ENCODE measurements at regions of chr20 and their contacts with region 1.

Region 1: GRCh38 chr20:47576516-47577033 is 74.9 kb downstream of the NCOA3 start:
- DNase-seq: peak; percentile 60
- ATAC-seq: peak; percentile 63
- H3K4me3 ChIP-seq: peak overlapping the region in 3 of 5 experiments; percentile 2 to 50 (median 15)
- H3K4me3 Mint-ChIP-seq: peak overlapping the region; percentile 76
- H3K27ac ChIP-seq: peak overlapping the region; percentile 46 to 58
- H3K27ac Mint-ChIP-seq: peak overlapping the region; percentile 68
- H3K4me1 ChIP-seq: peaks cover 77 to 91% of the 10 kb centered on the region in 2 donors
- H3K4me1 Mint-ChIP-seq: peaks cover 88% of the 10 kb centered on the region
- H3K27me3 ChIP-seq: no peaks in the 10 kb centered on the region
- H3K27me3 Mint-ChIP-seq: no peaks in the 10 kb centered on the region
- CTCF ChIP-seq: no peak

Region 2: DNA sequence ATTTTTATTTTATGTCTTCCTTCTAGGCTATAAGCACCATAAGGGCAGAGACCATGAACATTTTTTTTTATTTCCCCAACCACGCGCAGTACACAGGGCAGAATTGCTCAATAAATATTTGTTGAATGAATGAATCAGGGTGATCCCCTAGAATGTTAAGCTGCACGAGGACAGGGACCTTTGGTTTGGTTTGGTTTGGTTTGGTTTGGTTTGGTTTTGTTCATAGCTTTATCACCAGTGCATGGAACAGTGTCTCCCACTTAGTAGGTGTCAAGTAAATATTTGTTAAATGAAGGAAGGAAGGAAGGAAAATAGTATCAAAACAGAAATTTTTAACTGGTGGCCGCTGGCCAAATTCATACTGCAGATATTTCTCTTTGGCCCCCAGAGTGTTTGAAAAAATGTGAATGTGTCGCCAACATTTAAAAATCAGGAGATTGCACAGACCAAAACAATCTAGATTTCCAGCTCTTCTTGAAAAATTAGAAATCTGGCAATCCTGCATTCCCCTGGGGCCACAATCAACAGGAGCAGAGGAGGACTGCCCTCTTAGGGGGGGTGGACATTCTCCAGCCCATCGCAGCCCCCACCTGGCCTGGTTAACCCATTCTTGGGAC is 476.6 kb before region 1 on chr20:
- CTCF ChIA-PET with region 1: no interaction called
- POLR2A ChIA-PET with region 1: no interaction called
- intact Hi-C with region 1: no loop called
- DNase-seq: no peak
- ATAC-seq: no peak
- H3K4me3 ChIP-seq: no peak overlapping the region
- H3K4me3 Mint-ChIP-seq: no peak overlapping the region
- H3K27ac ChIP-seq: no peak overlapping the region
- H3K27ac Mint-ChIP-seq: no peak overlapping the region
- H3K4me1 ChIP-seq: no peaks in the 10 kb centered on the region
- H3K4me1 Mint-ChIP-seq: no peaks in the 10 kb centered on the region
- H3K27me3 ChIP-seq: peaks cover 0 to 15% (median 0%) of the 10 kb centered on the region in 4 experiments
- H3K27me3 Mint-ChIP-seq: peaks cover 29% of the 10 kb centered on the region
- CTCF ChIP-seq: no peak

Region 3: DNA sequence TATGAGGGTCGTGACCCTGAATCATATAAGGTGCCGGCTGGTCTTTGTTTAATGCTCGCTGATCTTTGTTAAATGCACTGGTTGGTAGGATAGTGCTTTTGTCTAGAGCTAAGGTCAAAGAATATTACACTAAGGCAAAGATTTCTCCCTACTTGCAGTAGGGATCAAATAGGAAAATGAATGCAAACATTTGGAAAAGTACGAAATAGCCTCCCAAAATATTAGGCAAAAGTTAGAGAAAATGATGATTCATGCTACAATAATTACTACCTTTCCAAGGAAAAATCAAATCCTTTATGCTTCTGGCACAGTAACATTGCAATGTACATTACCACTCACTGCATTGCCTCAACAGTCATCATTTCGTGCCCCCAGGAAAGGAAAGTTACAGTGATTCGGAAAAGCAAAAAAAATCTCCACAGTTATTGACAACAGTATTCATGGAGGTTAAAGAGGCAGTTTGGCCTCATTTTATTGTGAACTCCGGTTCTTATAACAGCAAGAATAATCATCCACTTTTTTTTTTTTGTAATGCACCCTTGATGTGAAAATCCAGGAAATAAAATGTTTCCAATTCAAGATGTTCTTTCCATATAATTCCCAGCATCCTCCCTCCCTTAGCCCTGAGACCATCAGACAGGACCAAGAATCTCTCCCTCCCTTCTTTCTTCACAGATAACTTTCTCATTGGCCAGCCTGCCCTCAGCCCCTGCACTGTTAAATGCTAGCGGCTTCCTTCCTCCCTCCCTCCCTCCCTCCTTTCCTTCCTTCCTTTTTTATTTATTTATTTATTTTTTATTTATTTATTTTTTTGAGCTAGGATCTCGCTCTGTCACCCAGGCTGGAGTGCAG is 158.3 kb before region 1 on chr20:
- CTCF ChIA-PET with region 1: no interaction called
- POLR2A ChIA-PET with region 1: no interaction called
- intact Hi-C with region 1: loop called (anchors 5 kb)
- DNase-seq: no peak
- ATAC-seq: no peak
- H3K4me3 ChIP-seq: no peak overlapping the region
- H3K4me3 Mint-ChIP-seq: no peak overlapping the region
- H3K27ac ChIP-seq: peak overlapping the region; percentile 97 to 99
- H3K27ac Mint-ChIP-seq: peak overlapping the region; percentile 99
- H3K4me1 ChIP-seq: peaks cover 59 to 73% of the 10 kb centered on the region in 2 donors
- H3K4me1 Mint-ChIP-seq: peaks cover 67% of the 10 kb centered on the region
- H3K27me3 ChIP-seq: no peaks in the 10 kb centered on the region
- H3K27me3 Mint-ChIP-seq: no peaks in the 10 kb centered on the region
- CTCF ChIP-seq: no peak

Region 4: GRCh38 chr20:47529840-47530239 is 46.7 kb before region 1 on chr20:
- CTCF ChIA-PET with region 1: no interaction called
- POLR2A ChIA-PET with region 1: no interaction called
- intact Hi-C with region 1: no loop called
- DNase-seq: no peak
- ATAC-seq: no peak
- H3K4me3 ChIP-seq: no peak overlapping the region
- H3K4me3 Mint-ChIP-seq: no peak overlapping the region
- H3K27ac ChIP-seq: peak overlapping the region in 1 of 2 donors; percentile 42
- H3K27ac Mint-ChIP-seq: peak overlapping the region; percentile 32
- H3K4me1 ChIP-seq: peaks cover 21 to 26% of the 10 kb centered on the region in 2 donors
- H3K4me1 Mint-ChIP-seq: peaks cover 54% of the 10 kb centered on the region
- H3K27me3 ChIP-seq: no peaks in the 10 kb centered on the region
- H3K27me3 Mint-ChIP-seq: no peaks in the 10 kb centered on the region
- CTCF ChIP-seq: no peak

Region 5: GRCh38 chr20:47540443-47541354 is 35.9 kb before region 1 on chr20:
- CTCF ChIA-PET with region 1: no interaction called
- POLR2A ChIA-PET with region 1: no interaction called
- intact Hi-C with region 1: loop called (anchors 5 kb)
- DNase-seq: peak; percentile 30
- ATAC-seq: no peak
- H3K4me3 ChIP-seq: no peak overlapping the region
- H3K4me3 Mint-ChIP-seq: peak overlapping the region; percentile 24
- H3K27ac ChIP-seq: peak overlapping the region in 1 of 2 donors; percentile 73
- H3K27ac Mint-ChIP-seq: peak overlapping the region; percentile 10
- H3K4me1 ChIP-seq: peaks cover 76 to 90% of the 10 kb centered on the region in 2 donors
- H3K4me1 Mint-ChIP-seq: peaks cover 84% of the 10 kb centered on the region
- H3K27me3 ChIP-seq: no peaks in the 10 kb centered on the region
- H3K27me3 Mint-ChIP-seq: no peaks in the 10 kb centered on the region
- CTCF ChIP-seq: no peak

Region 6: GRCh38 chr20:47561180-47561579 is 15.4 kb before region 1 on chr20:
- CTCF ChIA-PET with region 1: interaction called, 4 read pairs
- POLR2A ChIA-PET with region 1: interaction called, 3 read pairs
- intact Hi-C with region 1: loop called (anchors 2 kb)
- DNase-seq: no peak
- ATAC-seq: no peak
- H3K4me3 ChIP-seq: peak overlapping the region in 1 of 5 experiments; percentile 36
- H3K4me3 Mint-ChIP-seq: peak overlapping the region; percentile 50
- H3K27ac ChIP-seq: peak overlapping the region in 1 of 2 donors; percentile 51
- H3K27ac Mint-ChIP-seq: no peak overlapping the region
- H3K4me1 ChIP-seq: peaks cover 75 to 87% of the 10 kb centered on the region in 2 donors
- H3K4me1 Mint-ChIP-seq: peaks cover 88% of the 10 kb centered on the region
- H3K27me3 ChIP-seq: no peaks in the 10 kb centered on the region
- H3K27me3 Mint-ChIP-seq: no peaks in the 10 kb centered on the region
- CTCF ChIP-seq: no peak

Region 7: DNA sequence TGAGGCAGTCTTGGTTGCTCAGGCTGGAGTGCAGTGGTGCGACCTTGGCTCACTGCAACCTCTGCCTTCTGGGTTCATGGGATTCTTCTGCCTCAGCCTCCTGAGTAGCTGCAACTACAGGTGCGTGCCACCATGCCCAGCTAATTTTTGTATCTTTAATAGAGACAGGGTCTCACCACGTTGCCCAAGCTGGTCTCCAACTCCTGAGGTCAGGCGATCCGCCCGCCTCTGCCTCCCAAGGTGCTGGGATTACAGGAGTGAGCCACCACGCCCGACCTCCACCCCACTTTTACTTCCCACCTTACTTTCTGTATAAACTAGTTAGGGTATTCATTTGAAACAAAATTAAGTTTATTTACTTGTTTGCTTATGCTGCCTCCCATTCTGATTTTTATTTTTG is 11.6 kb after region 1 on chr20:
- CTCF ChIA-PET with region 1: no interaction called
- POLR2A ChIA-PET with region 1: interaction called, 4 read pairs
- intact Hi-C with region 1: loop called (anchors 2 kb)
- DNase-seq: no peak
- ATAC-seq: no peak
- H3K4me3 ChIP-seq: no peak overlapping the region
- H3K4me3 Mint-ChIP-seq: no peak overlapping the region
- H3K27ac ChIP-seq: no peak overlapping the region
- H3K27ac Mint-ChIP-seq: no peak overlapping the region
- H3K4me1 ChIP-seq: peaks cover 6 to 8% of the 10 kb centered on the region in 2 donors
- H3K4me1 Mint-ChIP-seq: peaks cover 54% of the 10 kb centered on the region
- H3K27me3 ChIP-seq: no peaks in the 10 kb centered on the region
- H3K27me3 Mint-ChIP-seq: no peaks in the 10 kb centered on the region
- CTCF ChIP-seq: no peak

Region 8: GRCh38 chr20:47610247-47610944 is 33.8 kb after region 1 on chr20:
- CTCF ChIA-PET with region 1: interaction called, 5 read pairs
- POLR2A ChIA-PET with region 1: no interaction called
- intact Hi-C with region 1: loop called (anchors 5 kb)
- DNase-seq: peak; percentile 52
- ATAC-seq: peak; percentile 89
- H3K4me3 ChIP-seq: no peak overlapping the region
- H3K4me3 Mint-ChIP-seq: peak overlapping the region; percentile 68
- H3K27ac ChIP-seq: peak overlapping the region; percentile 15 to 73
- H3K27ac Mint-ChIP-seq: peak overlapping the region; percentile 81
- H3K4me1 ChIP-seq: peaks cover 27 to 37% of the 10 kb centered on the region in 2 donors
- H3K4me1 Mint-ChIP-seq: peaks cover 76% of the 10 kb centered on the region
- H3K27me3 ChIP-seq: no peaks in the 10 kb centered on the region
- H3K27me3 Mint-ChIP-seq: no peaks in the 10 kb centered on the region
- CTCF ChIP-seq: no peak

Region 9: GRCh38 chr20:47740862-47741184 is 164.2 kb after region 1 on chr20:
- CTCF ChIA-PET with region 1: no interaction called
- POLR2A ChIA-PET with region 1: no interaction called
- intact Hi-C with region 1: no loop called
- DNase-seq: no peak
- ATAC-seq: no peak
- H3K4me3 ChIP-seq: no peak overlapping the region
- H3K4me3 Mint-ChIP-seq: no peak overlapping the region
- H3K27ac ChIP-seq: no peak overlapping the region
- H3K27ac Mint-ChIP-seq: no peak overlapping the region
- H3K4me1 ChIP-seq: peaks cover 0 to 9% of the 10 kb centered on the region in 2 donors
- H3K4me1 Mint-ChIP-seq: no peaks in the 10 kb centered on the region
- H3K27me3 ChIP-seq: peaks cover 0 to under 1% (median 0%) of the 10 kb centered on the region in 4 experiments
- H3K27me3 Mint-ChIP-seq: peaks cover 8% of the 10 kb centered on the region
- CTCF ChIP-seq: no peak